Dendritic cell treated with granulocyte-macrophage colony-stimulating factor and Interleukin-4, amounts not matched to agents 40 ng/mL and 50 ng/mL, for 4 days (primary cell): ENCODE measurements at regions of chr15 and their contacts with region 1.

Region 1: DNA sequence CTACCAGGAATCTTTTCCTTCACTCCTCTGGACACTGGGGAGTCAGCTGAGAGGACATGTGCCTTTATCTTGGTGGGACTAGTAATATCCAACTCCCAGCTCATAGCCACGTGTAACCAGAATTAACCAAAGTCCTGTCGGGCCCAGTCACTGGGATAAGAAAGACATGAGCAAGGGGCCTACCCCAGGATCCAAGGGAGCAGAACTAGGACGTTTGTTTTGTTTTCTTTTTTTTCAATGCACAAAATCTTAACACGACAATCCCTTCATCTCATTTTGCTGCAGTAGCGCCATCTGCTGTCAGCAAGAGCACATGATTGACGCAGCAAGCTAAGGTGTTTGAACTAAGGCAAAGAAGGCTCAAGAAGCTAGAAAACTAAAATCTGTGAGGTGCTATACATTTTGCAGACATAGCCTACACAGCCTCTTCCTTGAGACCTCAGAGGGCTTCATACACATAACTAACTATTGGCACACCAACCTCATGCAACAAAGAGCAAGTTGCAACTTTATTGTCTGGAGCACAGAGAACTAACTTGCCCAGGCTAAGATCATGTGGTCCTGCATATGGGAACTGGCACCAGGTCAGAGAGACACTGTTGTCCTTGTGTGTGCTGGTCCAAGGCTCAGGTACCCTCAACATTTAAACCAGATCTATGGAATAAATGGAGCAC is 43.6 kb downstream of the RLBP1 start:
- H3K4me3 Mint-ChIP-seq: no peak overlapping the region
- H3K27ac Mint-ChIP-seq: no peak overlapping the region
- H3K4me1 Mint-ChIP-seq: no peaks in the 10 kb centered on the region
- H3K27me3 Mint-ChIP-seq: no peaks in the 10 kb centered on the region

Region 2: DNA sequence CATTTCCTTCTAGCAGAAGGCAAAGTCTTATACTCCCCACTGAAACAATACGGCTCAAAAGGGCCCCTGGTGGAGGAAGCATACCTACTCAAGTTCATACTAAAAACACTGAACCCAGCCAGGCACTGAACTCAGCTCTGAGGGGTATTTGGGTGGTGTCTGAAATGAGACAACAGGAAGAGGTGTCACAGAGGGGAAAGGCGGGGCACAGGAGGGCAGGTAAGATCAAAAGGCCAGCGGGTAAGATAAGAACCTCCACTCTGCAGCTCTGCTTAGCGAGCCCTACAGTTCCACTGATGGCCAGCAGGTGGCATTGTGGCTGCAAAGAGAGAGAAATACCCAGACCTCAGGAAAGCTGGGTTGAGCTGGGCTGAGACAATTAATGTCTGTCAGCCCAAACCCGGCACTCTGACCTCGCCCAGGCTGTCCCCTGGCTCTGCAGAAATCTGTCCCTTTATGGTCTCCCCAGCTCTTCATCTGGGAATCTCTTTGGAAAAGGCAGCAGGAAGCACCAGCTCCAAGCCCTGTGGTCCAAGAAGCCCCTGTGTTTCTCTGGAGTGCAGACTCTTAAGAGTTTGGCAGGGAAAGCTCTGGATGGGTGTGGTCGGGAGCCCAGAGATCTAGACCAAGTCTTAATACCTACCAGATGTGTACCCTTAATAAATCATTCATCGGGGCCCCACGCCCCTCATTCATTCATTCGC is 273.0 kb before region 1 on chr15:
- intact Hi-C with region 1: loop called (anchors 2 kb)
- H3K4me3 Mint-ChIP-seq: no peak overlapping the region
- H3K27ac Mint-ChIP-seq: no peak overlapping the region
- H3K4me1 Mint-ChIP-seq: no peaks in the 10 kb centered on the region
- H3K27me3 Mint-ChIP-seq: no peaks in the 10 kb centered on the region

Region 3: DNA sequence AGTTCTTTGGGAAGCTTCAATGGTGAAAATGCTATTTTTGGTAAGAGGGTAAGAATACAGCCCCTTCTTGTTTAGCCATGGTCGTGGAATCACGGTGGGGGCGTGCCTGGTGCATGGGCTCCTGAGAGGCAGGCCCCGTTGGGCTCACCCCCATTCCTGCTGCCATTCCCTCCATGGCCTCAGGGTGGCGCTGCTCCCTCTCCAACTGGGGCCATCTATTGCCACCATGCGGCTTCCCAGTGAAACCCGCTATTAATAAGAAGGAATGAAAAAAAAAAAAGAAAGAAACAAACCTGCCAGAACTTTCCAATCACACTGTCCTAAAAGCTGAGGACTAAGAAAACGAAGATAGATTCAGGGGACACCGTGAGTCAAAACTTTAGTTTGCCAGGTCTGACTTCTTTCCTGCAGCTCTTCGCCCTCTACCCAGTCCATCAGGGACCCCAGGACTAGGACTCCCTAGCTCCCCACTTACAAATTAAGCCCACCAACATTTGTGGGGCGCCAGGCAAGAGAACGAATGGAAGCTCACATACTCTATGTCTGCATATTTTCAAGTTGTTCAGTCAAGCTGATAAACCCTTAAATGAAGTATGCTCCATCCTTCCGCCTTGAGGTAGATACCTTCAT is 120.2 kb before region 1 on chr15:
- intact Hi-C with region 1: loop called (anchors 1 kb)
- H3K4me3 Mint-ChIP-seq: no peak overlapping the region
- H3K27ac Mint-ChIP-seq: no peak overlapping the region
- H3K4me1 Mint-ChIP-seq: peaks cover 28% of the 10 kb centered on the region
- H3K27me3 Mint-ChIP-seq: peaks cover 2% of the 10 kb centered on the region